Motor neuron (in vitro differentiated cells): ENCODE measurements at regions of chr13 and their contacts with region 1.

Region 1: GRCh38 chr13:31236211-31236786 is 36.5 kb downstream of the B3GLCT start:
- ATAC-seq: peak in 4 of 8 experiments; percentile 44 to 79 (median 76)
- H3K4me3 ChIP-seq: no peak overlapping the region
- H3K27ac ChIP-seq: no peak overlapping the region
- H3K4me1 ChIP-seq: no peaks in the 10 kb centered on the region

Region 2: GRCh38 chr13:30234619-30235162 is 1001.6 kb before region 1 on chr13:
- in situ Hi-C with region 1: no loop called
- ATAC-seq: peak in 5 of 8 experiments; percentile 92 to 94 (median 93)
- H3K4me3 ChIP-seq: no peak overlapping the region
- H3K27ac ChIP-seq: peak overlapping the region in 1 of 2 donors; percentile 48
- H3K4me1 ChIP-seq: peaks cover 4 to 11% of the 10 kb centered on the region in 2 donors

Region 3: GRCh38 chr13:31424117-31424729 is 187.9 kb after region 1 on chr13:
- in situ Hi-C with region 1: loop called in 4 of 9 experiments (anchors 10 to 25 kb)
- ATAC-seq: peak; percentile 86 to 100 (median 96)
- H3K4me3 ChIP-seq: no peak overlapping the region
- H3K27ac ChIP-seq: no peak overlapping the region
- H3K4me1 ChIP-seq: no peaks in the 10 kb centered on the region

Region 4: GRCh38 chr13:31538067-31539042 is 302.1 kb after region 1 on chr13:
- in situ Hi-C with region 1: loop called in 1 of 9 experiments (anchors 25 kb)
- ATAC-seq: peak in 3 of 8 experiments; percentile 32 to 75 (median 70)
- H3K4me3 ChIP-seq: no peak overlapping the region
- H3K27ac ChIP-seq: no peak overlapping the region
- H3K4me1 ChIP-seq: peaks cover 10 to 21% of the 10 kb centered on the region in 2 donors

Region 5: DNA sequence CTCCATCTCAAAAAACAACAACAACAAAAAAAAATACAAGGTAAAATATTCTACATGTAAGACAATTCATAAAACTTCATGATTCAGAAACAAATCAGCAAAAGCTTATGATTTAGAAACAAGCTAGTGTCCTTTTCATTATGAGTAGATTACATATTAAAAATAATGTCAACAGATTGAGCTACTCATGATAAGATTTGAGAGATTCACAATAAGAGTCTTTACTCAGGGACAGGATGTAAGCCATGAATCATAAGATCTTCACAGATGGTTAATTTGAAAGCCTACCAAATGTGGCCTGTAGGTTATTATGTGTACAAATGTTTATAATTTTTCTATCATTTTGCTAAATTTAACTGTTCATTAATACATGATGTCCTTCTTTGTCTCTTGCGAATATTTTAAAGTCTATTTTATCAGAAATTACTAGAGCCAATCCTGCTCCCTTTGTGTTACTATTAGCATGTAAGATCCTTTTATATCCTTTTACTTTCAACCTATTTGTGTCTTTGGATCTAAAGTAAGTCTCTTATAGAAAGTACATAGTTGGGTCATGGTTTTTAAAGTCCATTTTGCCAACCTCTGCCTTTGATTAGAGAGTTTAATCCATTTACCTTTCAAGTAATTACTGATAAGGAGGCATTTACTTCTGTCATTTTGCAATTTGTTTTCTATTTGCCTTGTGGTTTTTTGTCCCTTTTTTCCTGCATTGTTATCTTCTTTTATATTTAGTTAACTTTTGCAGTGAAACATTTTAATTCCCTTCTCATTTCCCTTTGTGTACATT is 434.7 kb after region 1 on chr13:
- in situ Hi-C with region 1: no loop called
- ATAC-seq: no peak
- H3K4me3 ChIP-seq: no peak overlapping the region
- H3K27ac ChIP-seq: no peak overlapping the region
- H3K4me1 ChIP-seq: peaks cover 0 to 6% of the 10 kb centered on the region in 2 donors

Region 6: DNA sequence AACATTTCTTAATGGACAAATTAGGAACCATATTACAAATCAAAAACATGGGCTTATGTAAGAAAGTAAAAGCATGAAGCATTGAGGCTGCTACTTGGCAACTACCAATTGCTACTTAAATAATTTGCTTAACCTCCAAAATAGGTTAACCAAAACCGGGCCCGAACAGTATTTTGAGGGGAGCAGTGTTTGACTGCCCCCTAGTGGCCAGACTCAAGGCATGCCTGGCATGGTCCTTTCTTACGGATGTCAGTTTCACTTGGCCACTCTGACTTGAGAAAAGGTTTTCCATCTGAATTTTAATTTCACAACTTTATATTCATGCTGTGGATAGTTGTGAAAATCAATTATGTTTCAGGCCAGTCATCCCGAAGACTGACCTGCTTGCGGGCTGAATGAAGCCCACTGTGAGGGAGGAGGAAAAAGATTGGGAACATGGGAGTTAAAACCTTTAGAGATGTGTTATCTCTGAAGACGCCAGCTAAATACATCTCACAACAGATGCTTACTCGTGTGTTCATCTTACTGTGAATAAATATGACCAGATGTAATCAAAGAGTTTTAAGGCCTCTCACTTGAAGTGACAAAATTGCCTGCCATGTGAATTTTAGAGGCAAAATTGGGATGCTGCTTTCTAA is 505.9 kb after region 1 on chr13:
- in situ Hi-C with region 1: loop called in 5 of 9 experiments (anchors 25 kb)
- ATAC-seq: peak in 7 of 8 experiments; percentile 51 to 88 (median 73)
- H3K4me3 ChIP-seq: no peak overlapping the region
- H3K27ac ChIP-seq: no peak overlapping the region
- H3K4me1 ChIP-seq: no peaks in the 10 kb centered on the region